CD4-positive, alpha-beta T cell (primary cell): ENCODE measurements at regions of chr12 and their contacts with region 1.

Region 1: GRCh38 chr12:74483057-74483456 is 54.6 kb upstream of the ATXN7L3B start:
- DNase-seq: no peak
- ATAC-seq: no peak
- H3K4me3 ChIP-seq: no peak overlapping the region
- H3K4me3 Mint-ChIP-seq: no peak overlapping the region
- H3K27ac ChIP-seq: no peak overlapping the region
- H3K27ac Mint-ChIP-seq: no peak overlapping the region
- H3K4me1 ChIP-seq: no peaks in the 10 kb centered on the region
- H3K4me1 Mint-ChIP-seq: no peaks in the 10 kb centered on the region
- H3K27me3 ChIP-seq: no peaks in the 10 kb centered on the region
- H3K27me3 Mint-ChIP-seq: no peaks in the 10 kb centered on the region
- CTCF ChIP-seq: no peak

Region 2: GRCh38 chr12:74193191-74193590 is 289.9 kb before region 1 on chr12:
- CTCF ChIA-PET with region 1: no interaction called
- POLR2A ChIA-PET with region 1: no interaction called
- intact Hi-C with region 1: no loop called
- DNase-seq: no peak
- ATAC-seq: no peak
- H3K4me3 ChIP-seq: no peak overlapping the region
- H3K4me3 Mint-ChIP-seq: no peak overlapping the region
- H3K27ac ChIP-seq: no peak overlapping the region
- H3K27ac Mint-ChIP-seq: no peak overlapping the region
- H3K4me1 ChIP-seq: no peaks in the 10 kb centered on the region
- H3K4me1 Mint-ChIP-seq: no peaks in the 10 kb centered on the region
- H3K27me3 ChIP-seq: no peaks in the 10 kb centered on the region
- H3K27me3 Mint-ChIP-seq: no peaks in the 10 kb centered on the region
- CTCF ChIP-seq: no peak

Region 3: GRCh38 chr12:74971201-74971600 is 488.1 kb after region 1 on chr12:
- CTCF ChIA-PET with region 1: no interaction called
- POLR2A ChIA-PET with region 1: no interaction called
- intact Hi-C with region 1: loop called in 1 of 2 experiments (anchors 5 kb)
- DNase-seq: no peak
- ATAC-seq: no peak
- H3K4me3 ChIP-seq: no peak overlapping the region
- H3K4me3 Mint-ChIP-seq: no peak overlapping the region
- H3K27ac ChIP-seq: no peak overlapping the region
- H3K27ac Mint-ChIP-seq: no peak overlapping the region
- H3K4me1 ChIP-seq: no peaks in the 10 kb centered on the region
- H3K4me1 Mint-ChIP-seq: no peaks in the 10 kb centered on the region
- H3K27me3 ChIP-seq: no peaks in the 10 kb centered on the region
- H3K27me3 Mint-ChIP-seq: no peaks in the 10 kb centered on the region
- CTCF ChIP-seq: no peak